ENCODE measurements at regions of chr17 and their contacts with region 1.

Region 1: DNA sequence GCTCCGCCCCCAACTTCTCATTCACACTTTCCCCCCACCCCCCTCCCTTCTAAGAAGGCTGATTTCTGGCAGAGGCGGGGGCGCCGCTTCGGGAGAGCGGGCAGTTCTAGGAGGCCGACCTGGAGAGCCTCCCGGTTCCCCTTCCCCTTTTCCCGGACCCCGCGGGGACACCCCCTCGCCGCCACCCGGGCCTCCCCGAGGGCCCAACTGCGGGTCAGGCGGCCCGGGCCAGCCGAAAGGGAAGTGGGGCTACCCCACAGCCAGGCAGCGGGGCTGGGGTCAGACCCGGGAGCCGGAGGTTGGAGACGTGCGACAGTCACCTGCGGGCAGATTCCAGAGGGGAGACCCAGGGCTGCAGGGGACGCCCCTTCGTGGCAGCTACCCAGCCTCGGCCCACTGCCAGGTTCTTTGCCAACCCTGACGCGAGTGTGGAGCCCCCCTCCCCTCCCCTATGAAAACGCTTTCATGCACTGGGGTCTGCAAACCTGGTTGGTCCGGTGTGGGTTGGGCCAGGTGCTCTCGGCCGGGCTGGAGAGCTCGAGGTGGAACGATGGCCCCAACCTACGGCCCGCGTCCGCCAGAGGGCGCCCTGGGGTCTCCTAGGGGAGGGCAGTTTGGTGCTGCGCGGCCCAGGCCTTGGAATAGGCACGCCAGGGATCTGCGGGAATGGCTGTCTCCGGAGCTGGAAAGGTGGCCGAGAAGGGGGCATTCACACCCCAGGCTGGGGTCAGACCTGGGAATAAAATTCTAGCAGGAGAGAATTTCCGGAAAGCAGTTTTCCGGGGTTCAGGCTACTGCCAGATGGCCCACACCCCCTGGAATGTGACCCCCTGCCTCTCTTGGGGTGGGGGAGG is 721 bp upstream of the SOCS3 start:
- DNase-seq: peak; percentile 96
- H3K4me3 Mint-ChIP-seq: peak overlapping the region; percentile 81
- H3K27ac Mint-ChIP-seq: peak overlapping the region; percentile 86
- H3K4me1 Mint-ChIP-seq: peaks cover 37% of the 10 kb centered on the region
- H3K27me3 Mint-ChIP-seq: peaks cover 4% of the 10 kb centered on the region

Region 2: GRCh38 chr17:78250891-78251794 is 109.5 kb before region 1 on chr17:
- CTCF ChIA-PET with region 1: interaction called, 13 read pairs
- POLR2A ChIA-PET with region 1: interaction called, 8 read pairs
- intact Hi-C with region 1: no loop called
- DNase-seq: peak; percentile 92
- H3K4me3 Mint-ChIP-seq: peak overlapping the region; percentile 44
- H3K27ac Mint-ChIP-seq: peak overlapping the region; percentile 9
- H3K4me1 Mint-ChIP-seq: peaks cover 31% of the 10 kb centered on the region
- H3K27me3 Mint-ChIP-seq: no peaks in the 10 kb centered on the region

Region 3: GRCh38 chr17:78289802-78290363 is 70.7 kb before region 1 on chr17:
- CTCF ChIA-PET with region 1: interaction called, 9 read pairs
- POLR2A ChIA-PET with region 1: interaction called, 3 read pairs
- intact Hi-C with region 1: loop called (anchors 1 kb)
- DNase-seq: peak; percentile 84
- H3K4me3 Mint-ChIP-seq: no peak overlapping the region
- H3K27ac Mint-ChIP-seq: no peak overlapping the region
- H3K4me1 Mint-ChIP-seq: peaks cover 2% of the 10 kb centered on the region
- H3K27me3 Mint-ChIP-seq: no peaks in the 10 kb centered on the region

Region 4: DNA sequence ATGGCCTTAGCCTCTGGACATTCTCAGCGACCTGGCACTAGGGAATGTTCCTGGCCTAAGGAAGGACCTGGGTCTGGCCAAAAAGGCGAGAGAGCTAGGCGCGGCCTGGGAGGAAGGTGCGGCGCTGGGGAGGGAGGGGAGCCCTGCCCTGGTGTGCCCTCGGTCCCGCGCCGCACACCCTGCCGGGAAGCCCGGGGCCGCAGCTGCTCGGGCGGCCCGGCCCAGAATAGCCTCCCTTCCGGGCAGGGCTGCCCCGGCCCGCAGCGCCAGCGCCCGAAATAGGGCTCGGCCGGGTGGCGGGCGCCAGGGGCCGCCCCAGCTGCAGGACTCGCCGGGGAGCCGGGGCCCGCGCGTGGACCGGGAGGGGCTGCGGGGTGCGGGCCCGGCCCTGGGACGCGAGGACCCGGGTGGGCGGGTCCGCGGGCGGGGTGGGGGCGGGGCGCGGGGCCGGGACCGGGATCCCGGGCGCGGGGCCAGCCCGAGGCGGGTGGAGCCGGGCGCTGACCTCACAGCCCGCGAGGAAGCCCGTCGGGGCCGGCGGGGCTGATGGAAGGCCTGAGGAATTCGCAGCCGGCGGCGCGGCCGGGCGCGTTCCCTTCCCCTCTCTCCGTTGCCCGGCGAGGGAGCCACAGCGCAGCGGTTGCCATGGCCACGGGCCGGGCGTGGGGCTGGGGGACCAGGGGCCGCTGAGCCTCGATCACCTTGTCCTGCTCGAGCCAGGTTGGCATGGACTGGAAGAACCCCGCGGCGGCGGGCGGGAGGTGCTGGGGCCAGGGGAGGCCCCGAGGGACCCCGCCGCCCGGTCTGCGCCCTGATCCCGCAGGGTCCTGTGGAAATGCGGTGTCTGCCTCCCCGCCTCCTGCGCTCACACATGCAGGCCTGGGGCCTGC is 18.8 kb before region 1 on chr17:
- CTCF ChIA-PET with region 1: interaction called, 5 read pairs
- POLR2A ChIA-PET with region 1: interaction called, 3 read pairs
- intact Hi-C with region 1: loop called (anchors 1 kb)
- DNase-seq: no peak
- H3K4me3 Mint-ChIP-seq: no peak overlapping the region
- H3K27ac Mint-ChIP-seq: no peak overlapping the region
- H3K4me1 Mint-ChIP-seq: peaks cover 74% of the 10 kb centered on the region
- H3K27me3 Mint-ChIP-seq: peaks cover 1% of the 10 kb centered on the region

Region 5: DNA sequence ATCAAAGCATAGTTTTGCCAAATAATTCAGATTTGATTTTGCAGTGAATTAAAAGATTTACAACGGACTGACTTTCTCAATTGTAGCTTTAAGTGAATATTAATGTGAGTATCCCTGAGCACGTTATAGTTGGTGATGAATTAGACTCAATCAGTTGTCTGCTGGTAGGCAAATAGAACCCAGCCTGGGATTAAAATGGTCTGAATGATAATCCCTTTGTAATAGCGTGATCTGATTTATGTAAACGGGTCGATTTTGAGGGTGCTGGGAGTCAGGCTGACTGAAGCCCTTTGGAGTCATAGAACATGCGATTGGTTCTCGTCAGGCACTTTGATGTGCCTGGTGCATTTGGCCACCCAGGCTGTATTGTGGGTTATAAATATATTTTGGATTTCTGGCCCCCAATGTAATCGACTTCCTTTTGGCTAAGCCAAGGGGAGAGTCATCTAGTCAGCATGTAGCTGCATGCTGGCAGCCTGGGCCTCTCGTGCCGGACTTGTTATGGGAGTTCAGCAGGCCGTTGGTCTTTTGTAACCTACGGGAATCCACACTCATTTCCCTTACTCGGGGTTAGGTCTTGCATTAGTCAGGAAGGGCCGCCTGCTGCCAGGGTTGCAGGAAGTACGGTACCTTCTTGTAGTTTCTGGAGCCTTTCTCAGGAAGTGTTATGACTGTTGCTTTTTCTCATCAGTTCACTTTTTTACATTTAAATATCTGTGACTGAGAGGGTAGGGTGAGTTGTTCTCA is 23.3 kb after region 1 on chr17:
- CTCF ChIA-PET with region 1: interaction called, 35 read pairs
- POLR2A ChIA-PET with region 1: interaction called, 28 read pairs
- intact Hi-C with region 1: loop called (anchors 1 kb)
- DNase-seq: peak; percentile 88
- H3K4me3 Mint-ChIP-seq: peak overlapping the region; percentile 75
- H3K27ac Mint-ChIP-seq: peak overlapping the region; percentile 99
- H3K4me1 Mint-ChIP-seq: peaks cover 87% of the 10 kb centered on the region
- H3K27me3 Mint-ChIP-seq: peaks cover 1% of the 10 kb centered on the region

Region 6: GRCh38 chr17:78421484-78422266 is 61.1 kb after region 1 on chr17:
- CTCF ChIA-PET with region 1: interaction called, 135 read pairs
- POLR2A ChIA-PET with region 1: interaction called, 13 read pairs
- intact Hi-C with region 1: loop called (anchors 1 kb)
- DNase-seq: peak; percentile 86
- H3K4me3 Mint-ChIP-seq: no peak overlapping the region
- H3K27ac Mint-ChIP-seq: peak overlapping the region; percentile 70
- H3K4me1 Mint-ChIP-seq: peaks cover 46% of the 10 kb centered on the region
- H3K27me3 Mint-ChIP-seq: no peaks in the 10 kb centered on the region